ENCODE measurements at regions of chr5 and their contacts with region 1.

Region 1: GRCh38 chr5:35830587-35830986 is 26.1 kb upstream of the IL7R start:
- DNase-seq: peak in 6 of 14 experiments; percentile 43 to 85 (median 71)
- ATAC-seq: peak; percentile 87
- H3K4me3 ChIP-seq: peak overlapping the region; percentile 10
- H3K4me3 Mint-ChIP-seq: peak overlapping the region; percentile 60
- H3K27ac ChIP-seq: peak overlapping the region; percentile 42 to 45
- H3K27ac Mint-ChIP-seq: peak overlapping the region; percentile 87
- H3K4me1 ChIP-seq: peaks cover 61% of the 10 kb centered on the region
- H3K4me1 Mint-ChIP-seq: peaks cover 95% of the 10 kb centered on the region
- H3K27me3 ChIP-seq: no peaks in the 10 kb centered on the region
- H3K27me3 Mint-ChIP-seq: no peaks in the 10 kb centered on the region
- CTCF ChIP-seq: no peak

Region 2: GRCh38 chr5:35803191-35803651 is 27.4 kb before region 1 on chr5:
- CTCF ChIA-PET with region 1: interaction called, 4 read pairs
- POLR2A ChIA-PET with region 1: interaction called, 5 read pairs
- intact Hi-C with region 1: loop called in 1 of 2 experiments (anchors 5 kb)
- DNase-seq: peak in 5 of 14 experiments; percentile 22 to 72 (median 62)
- ATAC-seq: peak; percentile 51
- H3K4me3 ChIP-seq: no peak overlapping the region
- H3K4me3 Mint-ChIP-seq: peak overlapping the region; percentile 49
- H3K27ac ChIP-seq: peak overlapping the region in 1 of 2 donors; percentile 23
- H3K27ac Mint-ChIP-seq: peak overlapping the region; percentile 80
- H3K4me1 ChIP-seq: peaks cover 40% of the 10 kb centered on the region
- H3K4me1 Mint-ChIP-seq: peaks cover 85% of the 10 kb centered on the region
- H3K27me3 ChIP-seq: no peaks in the 10 kb centered on the region
- H3K27me3 Mint-ChIP-seq: no peaks in the 10 kb centered on the region
- CTCF ChIP-seq: no peak

Region 3: DNA sequence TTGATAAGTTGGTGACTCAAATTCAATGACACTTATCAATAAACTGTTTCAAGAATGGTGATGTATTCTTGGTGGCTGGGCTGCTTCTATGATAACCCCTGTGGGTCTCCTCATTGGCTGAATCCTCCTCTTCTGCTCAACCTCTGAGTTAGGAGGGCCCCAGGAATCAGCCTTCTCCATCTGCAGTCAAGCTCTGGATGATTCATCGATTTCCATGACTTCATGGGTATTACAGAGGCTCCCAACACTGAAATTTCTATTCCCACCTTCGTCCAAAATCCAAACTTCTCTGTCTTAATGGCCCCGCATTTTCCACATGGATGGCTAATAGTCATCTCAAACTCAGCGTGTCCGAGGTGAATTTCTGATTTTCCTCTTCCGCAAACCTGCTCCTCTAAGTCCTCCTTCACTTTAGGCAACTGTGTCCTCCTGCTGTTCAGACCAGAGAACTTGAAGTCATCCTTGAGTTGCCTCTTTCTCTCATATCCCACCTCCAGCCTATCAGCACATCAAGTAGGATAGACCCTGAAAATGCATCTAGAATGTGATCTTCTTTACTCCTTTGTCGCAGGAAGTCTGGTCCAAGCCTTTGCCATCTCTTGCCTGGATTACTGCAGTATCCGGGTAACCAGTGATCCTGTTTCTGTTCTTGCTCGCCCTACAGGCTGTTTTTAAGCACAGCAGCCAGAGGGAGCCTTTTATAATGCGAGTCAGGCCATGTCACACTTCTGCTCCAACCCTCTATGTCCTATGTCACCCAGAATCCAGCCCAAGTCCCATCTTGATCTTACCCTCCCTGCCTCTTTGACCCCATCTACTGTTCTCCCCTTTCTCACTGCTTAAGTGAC is 15.3 kb before region 1 on chr5:
- CTCF ChIA-PET with region 1: interaction called, 19 read pairs
- POLR2A ChIA-PET with region 1: interaction called, 130 read pairs
- intact Hi-C with region 1: loop called (anchors 2 kb)
- DNase-seq: peak in 4 of 14 experiments; percentile 47 to 75 (median 69)
- ATAC-seq: peak; percentile 27
- H3K4me3 ChIP-seq: no peak overlapping the region
- H3K4me3 Mint-ChIP-seq: no peak overlapping the region
- H3K27ac ChIP-seq: peak overlapping the region; percentile 8 to 59
- H3K27ac Mint-ChIP-seq: no peak overlapping the region
- H3K4me1 ChIP-seq: peaks cover 65% of the 10 kb centered on the region
- H3K4me1 Mint-ChIP-seq: peaks cover 39% of the 10 kb centered on the region
- H3K27me3 ChIP-seq: no peaks in the 10 kb centered on the region
- H3K27me3 Mint-ChIP-seq: no peaks in the 10 kb centered on the region
- CTCF ChIP-seq: peak; percentile 64

Region 4: DNA sequence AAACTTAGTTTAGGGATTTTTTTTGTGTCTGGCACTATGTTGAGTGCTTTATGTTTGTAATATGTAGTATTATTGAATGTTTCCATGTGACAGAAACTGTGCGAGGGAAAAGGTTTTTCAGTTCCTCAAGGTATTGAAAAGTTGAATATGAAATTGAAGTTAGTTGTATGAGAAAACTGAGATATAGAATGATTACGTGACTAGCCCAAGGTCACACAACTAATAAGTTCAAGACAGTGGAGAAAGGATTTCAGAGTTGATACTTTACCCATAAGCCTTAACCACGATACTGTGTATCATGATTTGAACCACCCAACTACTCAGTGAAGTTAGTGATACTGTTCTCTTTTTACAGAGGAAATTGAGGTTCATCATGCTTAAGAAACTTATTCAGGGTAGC is 1051.7 kb after region 1 on chr5:
- CTCF ChIA-PET with region 1: no interaction called
- POLR2A ChIA-PET with region 1: no interaction called
- intact Hi-C with region 1: no loop called
- DNase-seq: no peak
- ATAC-seq: no peak
- H3K4me3 ChIP-seq: no peak overlapping the region
- H3K4me3 Mint-ChIP-seq: peak overlapping the region; percentile 64
- H3K27ac ChIP-seq: no peak overlapping the region
- H3K27ac Mint-ChIP-seq: peak overlapping the region; percentile 0
- H3K4me1 ChIP-seq: peaks cover 18% of the 10 kb centered on the region
- H3K4me1 Mint-ChIP-seq: peaks cover 71% of the 10 kb centered on the region
- H3K27me3 ChIP-seq: no peaks in the 10 kb centered on the region
- H3K27me3 Mint-ChIP-seq: no peaks in the 10 kb centered on the region
- CTCF ChIP-seq: no peak